Activated CD4-positive, alpha-beta memory T cell treated with anti-CD3 and anti-CD28 coated beads, Interleukin-2, amount 10 ng/mL, durations not matched to agents 7 days and 5 days (primary cell): ENCODE measurements at regions of chr3 and their contacts with region 1.

Region 1: DNA sequence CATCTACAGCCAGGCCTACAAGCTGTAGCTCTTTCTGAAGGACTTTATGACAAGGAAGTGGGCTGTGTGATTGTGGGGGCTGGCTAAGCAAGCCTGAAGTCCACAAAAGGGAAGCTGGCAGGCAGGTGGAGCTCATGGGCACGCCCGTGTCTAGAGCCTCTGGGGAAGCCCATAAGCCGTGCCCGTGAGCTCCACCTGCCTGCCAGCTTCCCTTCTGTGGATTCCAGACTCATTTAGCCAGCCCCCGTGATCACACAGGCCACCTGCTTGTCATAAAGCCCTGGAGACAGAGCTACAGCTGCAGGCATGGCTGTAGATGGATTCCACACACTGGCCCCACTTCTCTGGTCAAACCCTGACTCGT is 15.2 kb downstream of the EFCC1 start:
- DNase-seq: peak; percentile 68
- H3K4me3 Mint-ChIP-seq: peak overlapping the region; percentile 64
- H3K27ac Mint-ChIP-seq: peak overlapping the region; percentile 87
- H3K4me1 Mint-ChIP-seq: peaks cover 37% of the 10 kb centered on the region
- H3K27me3 Mint-ChIP-seq: no peaks in the 10 kb centered on the region

Region 2: GRCh38 chr3:128895843-128896697 is 120.3 kb before region 1 on chr3:
- CTCF ChIA-PET with region 1: no interaction called
- POLR2A ChIA-PET with region 1: no interaction called
- DNase-seq: no peak
- H3K4me3 Mint-ChIP-seq: no peak overlapping the region
- H3K27ac Mint-ChIP-seq: peak overlapping the region; percentile 50
- H3K4me1 Mint-ChIP-seq: peaks cover 11% of the 10 kb centered on the region
- H3K27me3 Mint-ChIP-seq: no peaks in the 10 kb centered on the region

Region 3: DNA sequence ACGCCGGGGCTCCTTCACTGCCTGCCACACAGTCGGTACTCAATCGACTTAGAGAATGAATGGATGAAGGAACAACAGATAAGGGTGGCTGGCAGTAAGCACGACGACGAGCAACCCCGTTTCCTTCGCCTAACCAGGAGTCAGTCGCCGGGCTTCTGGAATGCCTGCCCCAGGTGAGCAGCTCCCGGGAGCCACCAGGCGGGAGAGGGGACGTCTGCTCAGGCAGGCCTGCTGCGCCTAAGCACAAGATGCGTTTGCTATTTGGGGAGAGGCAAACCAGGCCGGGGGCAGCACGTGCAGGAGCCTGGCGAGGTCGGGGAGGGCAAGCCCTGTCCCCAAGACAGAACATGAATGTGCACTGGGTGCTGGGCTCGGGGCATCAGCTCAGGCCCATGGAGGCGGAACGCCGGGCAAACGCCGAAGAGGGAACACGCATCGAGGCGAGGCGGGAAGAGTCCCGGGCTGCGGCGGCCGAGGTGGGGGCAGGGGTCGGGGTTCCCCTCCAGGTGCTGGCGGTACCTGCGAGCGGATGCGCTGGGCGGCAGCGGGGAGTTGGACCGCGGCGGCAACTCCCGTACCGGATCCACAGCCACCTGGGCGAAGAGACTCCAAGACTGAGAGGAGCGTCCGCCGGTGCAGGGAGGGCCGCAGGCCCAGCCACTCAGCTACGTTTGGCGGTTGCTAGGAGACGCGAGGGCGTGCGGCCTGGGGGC is 22.7 kb before region 1 on chr3 and contains the start of gene CFAP92:
- CTCF ChIA-PET with region 1: interaction called, 18 read pairs
- POLR2A ChIA-PET with region 1: interaction called, 17 read pairs
- DNase-seq: peak; percentile 94
- H3K4me3 Mint-ChIP-seq: peak within 1 kb of the TSS; percentile 32
- H3K27ac Mint-ChIP-seq: no peak within 1 kb of the TSS
- H3K4me1 Mint-ChIP-seq: peaks cover 14% of the 10 kb centered on the region
- H3K27me3 Mint-ChIP-seq: peaks cover 13% of the 10 kb centered on the region
- total RNA-seq, gene CFAP92: 0.15 TPM in 1 of 2 experiments, not detected in the other

Region 4: GRCh38 chr3:129003578-129004160 is 12.7 kb before region 1 on chr3:
- CTCF ChIA-PET with region 1: interaction called, 18 read pairs
- POLR2A ChIA-PET with region 1: interaction called, 33 read pairs
- DNase-seq: peak; percentile 47
- H3K4me3 Mint-ChIP-seq: no peak overlapping the region
- H3K27ac Mint-ChIP-seq: no peak overlapping the region
- H3K4me1 Mint-ChIP-seq: peaks cover 37% of the 10 kb centered on the region
- H3K27me3 Mint-ChIP-seq: peaks cover 50% of the 10 kb centered on the region

Region 5: GRCh38 chr3:129026728-129027543 is 10.6 kb after region 1 on chr3:
- CTCF ChIA-PET with region 1: interaction called, 123 read pairs
- POLR2A ChIA-PET with region 1: interaction called, 56 read pairs
- DNase-seq: peak; percentile 95
- H3K4me3 Mint-ChIP-seq: peak overlapping the region; percentile 69
- H3K27ac Mint-ChIP-seq: peak overlapping the region; percentile 70
- H3K4me1 Mint-ChIP-seq: peaks cover 14% of the 10 kb centered on the region
- H3K27me3 Mint-ChIP-seq: peaks cover 6% of the 10 kb centered on the region

Region 6: GRCh38 chr3:129052675-129053074 is 36.3 kb after region 1 on chr3:
- CTCF ChIA-PET with region 1: interaction called, 28 read pairs
- POLR2A ChIA-PET with region 1: interaction called, 5 read pairs
- DNase-seq: no peak
- H3K4me3 Mint-ChIP-seq: no peak overlapping the region
- H3K27ac Mint-ChIP-seq: peak overlapping the region; percentile 28
- H3K4me1 Mint-ChIP-seq: peaks cover 7% of the 10 kb centered on the region
- H3K27me3 Mint-ChIP-seq: peaks cover 18% of the 10 kb centered on the region

Region 7: GRCh38 chr3:129384594-129385323 is 368.4 kb after region 1 on chr3:
- CTCF ChIA-PET with region 1: no interaction called
- POLR2A ChIA-PET with region 1: no interaction called
- DNase-seq: no peak
- H3K4me3 Mint-ChIP-seq: no peak overlapping the region
- H3K27ac Mint-ChIP-seq: no peak overlapping the region
- H3K4me1 Mint-ChIP-seq: no peaks in the 10 kb centered on the region
- H3K27me3 Mint-ChIP-seq: no peaks in the 10 kb centered on the region